Head of caudate nucleus (tissue), 42 donors: ENCODE measurements at regions of chr17 and their contacts with region 1.

Region 1: DNA sequence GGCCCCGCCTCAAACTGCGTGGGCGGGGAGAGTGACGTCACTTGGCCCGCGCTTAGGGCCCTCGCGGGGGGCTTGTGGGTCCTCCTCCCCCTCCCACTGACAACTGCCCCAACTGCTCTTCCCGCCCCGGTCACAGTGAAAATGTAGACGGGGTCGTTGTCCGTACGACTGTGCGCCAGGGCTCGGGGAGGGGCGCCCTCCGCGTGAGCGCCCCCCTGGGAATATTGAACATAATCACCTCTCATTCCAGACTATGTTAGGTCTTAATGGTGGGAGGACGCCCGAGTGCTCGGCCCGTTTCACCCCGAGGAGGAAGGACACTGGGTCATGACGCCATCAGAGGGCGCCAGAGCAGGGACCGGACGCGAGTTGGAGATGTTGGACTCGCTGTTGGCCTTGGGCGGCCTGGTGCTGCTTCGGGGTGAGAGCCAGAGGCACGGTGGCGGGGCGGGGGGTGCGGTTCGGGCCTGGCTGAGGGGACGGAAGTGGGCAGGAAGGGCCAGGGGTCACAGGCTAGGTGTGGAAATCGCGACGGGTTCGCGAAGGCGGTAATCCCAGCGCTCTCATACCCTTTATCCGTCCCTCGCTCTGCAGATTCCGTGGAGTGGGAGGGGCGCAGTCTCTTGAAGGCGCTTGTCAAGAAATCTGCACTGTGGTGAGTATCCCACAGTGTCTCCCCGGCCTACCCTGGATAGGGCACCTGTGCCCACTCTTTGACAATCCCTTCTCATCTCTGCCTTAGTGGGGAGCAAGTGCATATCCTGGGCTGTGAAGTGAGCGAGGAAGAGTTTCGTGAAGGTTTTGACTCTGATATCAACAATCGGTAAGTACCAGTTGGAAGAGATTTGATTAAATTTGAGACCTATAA is at the start of gene ELP5:
- DNase-seq: peak; percentile 84 to 95 (median 90)

Region 2: DNA sequence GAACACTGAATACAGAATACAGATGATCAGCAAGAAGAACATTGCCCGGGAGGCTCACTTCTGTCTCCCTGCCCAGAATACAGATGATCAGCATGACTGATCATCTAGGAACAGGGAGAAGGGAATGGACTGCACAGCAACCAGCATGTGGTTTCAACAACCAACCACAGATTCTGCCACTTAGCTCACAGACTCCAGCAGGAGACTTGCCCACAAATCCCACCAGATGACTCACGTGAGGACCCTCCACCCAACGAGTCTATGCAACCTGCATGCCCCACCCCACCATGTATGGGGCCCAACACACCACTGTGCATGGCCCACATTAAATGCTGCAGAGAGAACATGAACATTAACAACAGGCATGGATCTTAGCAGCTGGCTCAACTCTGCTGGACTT is 292.7 kb before region 1 on chr17:
- intact Hi-C with region 1: no loop called
- DNase-seq: no peak

Region 3: GRCh38 chr17:7239091-7240027 is 13.1 kb before region 1 on chr17 and contains the start of gene PHF23:
- intact Hi-C with region 1: loop called (anchors 1 kb)
- DNase-seq: peak; percentile 98 to 100 (median 99)

Region 4: DNA sequence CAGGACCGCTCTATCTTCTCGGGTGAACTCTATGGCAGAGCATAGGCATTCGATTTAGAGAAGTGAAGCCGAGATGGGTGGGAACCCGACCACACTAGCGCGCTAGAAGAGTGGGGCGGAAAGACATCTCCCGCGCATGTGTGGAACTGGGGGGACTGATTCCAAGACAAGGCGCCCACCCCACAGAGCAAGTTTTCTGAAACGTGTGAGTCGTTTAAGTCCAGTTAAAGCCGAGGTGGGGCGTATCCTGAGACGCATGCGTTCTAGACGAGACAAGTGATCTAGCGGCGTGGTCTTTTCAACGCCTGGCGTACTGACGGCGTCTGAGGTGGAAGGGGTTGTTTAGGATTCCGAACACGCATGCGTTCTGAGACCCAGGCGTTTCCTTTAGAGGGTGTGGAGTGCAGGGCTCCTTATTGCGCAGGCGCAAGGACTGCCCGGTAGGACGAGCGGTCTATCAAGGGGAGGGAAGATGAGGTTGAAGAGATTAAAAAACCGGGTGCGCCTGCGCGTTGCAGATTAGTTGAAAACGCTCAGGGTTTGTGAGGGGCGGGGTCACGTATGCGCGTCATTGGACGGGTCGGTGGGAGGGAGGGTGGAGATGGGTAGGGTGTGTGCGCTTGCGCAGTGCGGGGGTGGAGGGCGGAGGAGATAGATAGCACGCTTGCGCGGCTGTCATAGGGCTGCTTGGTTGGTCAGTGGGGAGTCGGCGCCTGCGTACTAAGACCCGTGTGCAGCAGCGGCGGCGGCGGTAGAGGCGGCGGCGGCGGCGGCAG is 54.7 kb after region 1 on chr17 and contains the start of gene EIF5A:
- intact Hi-C with region 1: loop called (anchors 5 kb)
- DNase-seq: peak; percentile 98 to 100 (median 99)